Psoas muscle (tissue), 8 donors: ENCODE measurements at regions of chr7 and their contacts with region 1.

Region 1: DNA sequence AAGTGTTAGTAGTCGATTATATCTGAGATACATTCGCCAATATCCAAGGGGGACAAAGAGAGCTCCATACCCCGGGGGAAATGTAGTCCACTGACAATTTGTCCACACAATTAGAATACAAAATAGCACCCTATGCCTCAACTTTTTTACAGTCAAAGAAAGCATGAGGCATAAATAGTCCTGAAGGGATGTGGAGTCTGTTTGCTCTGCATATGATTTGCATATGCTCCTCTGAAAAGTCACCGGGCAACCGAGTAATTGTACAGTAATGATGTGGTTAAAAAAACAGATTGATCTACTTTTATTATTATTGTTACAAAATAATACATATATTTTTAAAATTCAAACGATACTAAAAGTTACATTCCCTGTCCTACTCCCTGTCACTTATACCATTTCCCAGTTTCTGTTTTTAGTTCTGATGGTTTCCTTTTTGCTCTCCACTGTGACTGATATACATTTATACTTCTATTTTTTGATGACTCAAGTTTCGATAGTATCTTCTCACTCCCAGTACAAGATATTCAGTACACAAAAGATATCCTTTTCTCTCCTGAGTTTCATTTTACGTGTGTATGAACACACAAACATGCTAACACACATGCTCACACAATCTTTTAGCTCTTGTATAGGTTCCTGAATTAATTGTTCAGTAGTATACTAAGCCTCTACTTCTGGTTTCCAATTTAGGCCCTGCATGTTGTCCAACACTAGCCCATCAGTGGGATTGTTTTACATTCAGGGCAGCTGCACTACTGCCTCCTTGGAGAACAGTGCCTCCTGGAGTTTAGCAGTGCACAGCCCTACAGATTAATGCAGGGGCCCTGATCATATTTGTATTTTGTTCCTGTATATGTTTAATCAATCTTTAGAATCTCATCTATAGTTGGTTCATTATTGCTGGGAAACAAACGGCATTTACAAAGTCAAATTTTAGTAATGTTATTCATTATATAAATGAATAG is 130.9 kb downstream of the TES start:
- DNase-seq: no peak
- ATAC-seq: peak in 3 of 4 donors; percentile 75 to 88 (median 88)
- H3K4me3 ChIP-seq: no peak overlapping the region
- H3K27ac ChIP-seq: no peak overlapping the region
- H3K4me1 ChIP-seq: no peaks in the 10 kb centered on the region
- H3K27me3 ChIP-seq: no peaks in the 10 kb centered on the region
- CTCF ChIP-seq: peak; percentile 59

Region 2: GRCh38 chr7:116258734-116259133 is 82.5 kb before region 1 on chr7:
- intact Hi-C with region 1: loop called (anchors 1 to 5 kb)
- DNase-seq: no peak
- ATAC-seq: peak; percentile 57 to 89 (median 70)
- H3K4me3 ChIP-seq: no peak overlapping the region
- H3K27ac ChIP-seq: no peak overlapping the region
- H3K4me1 ChIP-seq: peaks cover 6% of the 10 kb centered on the region
- H3K27me3 ChIP-seq: no peaks in the 10 kb centered on the region
- CTCF ChIP-seq: peak; percentile 91

Region 3: DNA sequence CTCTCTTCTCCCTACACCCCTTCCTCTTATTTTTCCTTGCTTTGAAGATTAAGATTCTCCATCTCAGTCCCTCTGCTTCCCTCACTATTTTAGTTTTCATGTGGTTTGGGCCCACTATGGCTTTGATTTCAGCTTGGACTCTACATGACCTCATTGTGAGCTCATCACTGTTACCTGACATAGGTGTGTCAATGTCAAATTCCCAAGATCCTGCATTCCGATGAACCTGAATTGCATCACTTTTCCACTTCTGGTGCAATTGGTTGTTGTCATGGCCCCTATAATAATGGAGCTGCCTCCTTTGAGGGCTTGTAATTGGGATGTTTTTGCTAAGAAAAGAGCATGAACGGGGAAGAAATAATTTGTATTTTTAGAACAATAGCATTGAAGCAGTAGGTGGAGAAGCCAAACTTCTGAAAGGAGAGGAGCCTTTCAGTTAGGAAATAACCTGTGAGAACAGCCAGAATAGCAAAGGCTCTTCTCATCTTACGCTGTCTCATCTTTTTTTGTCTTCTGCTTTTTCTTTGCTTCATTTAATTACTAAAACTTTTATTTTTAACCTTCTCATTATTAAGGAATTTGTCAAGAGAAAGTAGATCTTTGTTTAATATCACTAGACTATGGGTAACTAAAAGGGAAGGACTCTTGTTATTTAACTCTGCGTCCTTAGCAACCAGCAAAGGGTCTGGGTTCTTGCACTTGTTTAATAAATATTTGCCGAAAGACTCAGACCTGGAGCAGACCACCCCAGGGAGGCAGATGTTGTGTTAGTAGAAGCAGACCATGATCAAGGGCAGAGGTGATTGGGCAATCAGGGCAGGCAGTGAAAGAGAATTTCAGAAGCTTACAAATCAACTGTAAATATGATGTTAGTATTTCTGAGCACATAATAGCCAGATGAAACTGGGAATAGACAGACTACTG is 35.5 kb before region 1 on chr7:
- intact Hi-C with region 1: no loop called
- DNase-seq: no peak
- ATAC-seq: peak in 1 of 4 donors; percentile 75
- H3K4me3 ChIP-seq: no peak overlapping the region
- H3K27ac ChIP-seq: no peak overlapping the region
- H3K4me1 ChIP-seq: no peaks in the 10 kb centered on the region
- H3K27me3 ChIP-seq: no peaks in the 10 kb centered on the region
- CTCF ChIP-seq: no peak

Region 4: GRCh38 chr7:116521046-116521664 is 179.9 kb after region 1 on chr7:
- intact Hi-C with region 1: loop called in 1 of 2 experiments (anchors 2 kb)
- DNase-seq: no peak
- ATAC-seq: no peak
- H3K4me3 ChIP-seq: no peak overlapping the region
- H3K27ac ChIP-seq: no peak overlapping the region
- H3K4me1 ChIP-seq: no peaks in the 10 kb centered on the region
- H3K27me3 ChIP-seq: no peaks in the 10 kb centered on the region
- CTCF ChIP-seq: no peak